ENCODE measurements at regions of chr12 and their contacts with region 1.

Region 1: DNA sequence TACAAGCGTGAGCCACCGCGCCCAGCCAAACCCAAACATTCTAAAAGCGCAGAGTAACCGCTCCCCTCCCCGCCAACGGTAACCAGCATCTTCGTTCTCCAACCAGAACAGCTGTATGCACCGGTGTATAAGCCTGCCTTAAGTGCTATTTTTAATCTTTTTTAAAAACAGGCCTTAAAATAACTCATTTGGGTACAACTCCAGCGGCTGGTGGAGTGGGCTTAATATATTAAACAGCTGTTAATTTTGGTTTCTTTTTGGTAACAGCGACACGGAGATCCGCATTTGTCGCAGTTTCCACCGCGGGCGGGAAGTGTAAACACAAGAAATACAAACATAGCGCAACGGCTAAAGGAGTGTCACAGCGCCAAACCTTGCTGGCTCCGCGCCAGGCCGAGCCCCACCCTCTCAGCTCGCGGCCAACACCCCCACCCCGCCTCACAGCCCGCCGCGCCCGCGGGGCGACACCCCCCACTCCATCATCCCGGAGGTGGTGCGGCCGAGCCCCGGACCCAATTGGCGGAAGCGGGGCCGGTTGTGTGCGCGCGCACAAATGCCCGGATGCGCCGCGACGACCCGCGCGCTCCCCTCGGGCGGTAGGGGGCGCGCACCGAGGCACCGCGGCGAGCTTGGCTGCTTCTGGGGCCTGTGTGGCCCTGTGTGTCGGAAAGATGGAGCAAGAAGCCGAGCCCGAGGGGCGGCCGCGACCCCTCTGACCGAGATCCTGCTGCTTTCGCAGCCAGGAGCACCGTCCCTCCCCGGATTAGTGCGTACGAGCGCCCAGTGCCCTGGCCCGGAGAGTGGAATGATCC is at the start of gene MDM2:
- DNase-seq: peak; percentile 94 to 99 (median 97)
- ATAC-seq: peak; percentile 91
- H3K4me3 ChIP-seq: peak within 1 kb of the TSS; percentile 97
- H3K4me3 Mint-ChIP-seq: peak within 1 kb of the TSS; percentile 95
- H3K27ac ChIP-seq: peak within 1 kb of the TSS; percentile 86 to 95
- H3K27ac Mint-ChIP-seq: peak within 1 kb of the TSS; percentile 97
- H3K4me1 ChIP-seq: peaks cover 24% of the 10 kb centered on the region
- H3K4me1 Mint-ChIP-seq: peaks cover 30% of the 10 kb centered on the region
- H3K27me3 ChIP-seq: no peaks in the 10 kb centered on the region
- H3K27me3 Mint-ChIP-seq: no peaks in the 10 kb centered on the region
- CTCF ChIP-seq: peak; percentile 66
- total RNA-seq, gene MDM2: 95.1 to 98.0 TPM

Region 2: DNA sequence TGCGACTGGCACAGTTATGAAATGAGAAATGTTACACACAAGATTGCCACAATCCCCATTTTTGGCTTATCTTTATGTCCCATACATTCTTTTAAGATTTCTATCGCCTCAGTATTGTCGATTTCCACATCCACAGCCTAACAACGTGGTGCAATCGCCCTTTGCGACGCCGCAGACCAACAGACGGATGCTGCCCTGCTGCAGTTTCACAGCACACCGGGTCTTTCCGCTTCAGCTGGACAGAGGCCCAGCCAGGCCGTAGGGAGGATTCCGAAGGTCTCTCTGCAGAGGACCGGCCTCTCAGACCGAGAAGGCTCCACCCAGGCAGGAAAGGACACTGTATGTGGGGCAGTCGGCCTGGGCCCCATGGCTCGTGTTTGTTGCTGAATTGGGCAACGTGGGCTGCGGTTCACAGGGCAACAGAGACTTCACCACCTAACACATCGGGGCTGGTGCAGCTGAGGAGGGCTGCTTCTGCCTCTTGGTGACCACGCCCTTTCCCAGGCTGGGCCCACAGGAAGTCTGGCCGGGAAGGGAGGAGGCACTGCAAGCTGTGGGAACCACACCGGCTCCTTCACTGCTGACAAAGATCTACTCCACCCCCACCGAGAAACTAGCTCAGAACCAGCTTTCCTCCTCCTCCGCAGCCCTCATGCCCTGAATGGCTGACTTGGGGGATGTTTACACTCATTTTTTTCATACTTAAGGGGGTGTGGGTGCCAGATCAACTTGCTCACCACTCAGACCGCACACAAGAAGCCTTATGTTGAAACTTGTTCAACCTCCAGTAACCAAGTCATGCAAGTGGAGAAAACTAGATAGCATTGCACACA is 442.7 kb before region 1 on chr12:
- CTCF ChIA-PET with region 1: no interaction called
- POLR2A ChIA-PET with region 1: interaction called, 5 read pairs
- intact Hi-C with region 1: loop called (anchors 1 to 10 kb)
- DNase-seq: peak; percentile 67 to 97 (median 86)
- ATAC-seq: peak; percentile 91
- H3K4me3 ChIP-seq: peak overlapping the region; percentile 32 to 54
- H3K4me3 Mint-ChIP-seq: peak overlapping the region; percentile 81
- H3K27ac ChIP-seq: peak overlapping the region; percentile 74 to 85
- H3K27ac Mint-ChIP-seq: peak overlapping the region; percentile 95
- H3K4me1 ChIP-seq: peaks cover 52% of the 10 kb centered on the region
- H3K4me1 Mint-ChIP-seq: peaks cover 73% of the 10 kb centered on the region
- H3K27me3 ChIP-seq: no peaks in the 10 kb centered on the region
- H3K27me3 Mint-ChIP-seq: no peaks in the 10 kb centered on the region
- CTCF ChIP-seq: no peak

Region 3: GRCh38 chr12:68745904-68746571 is 61.7 kb before region 1 on chr12 and contains the start of gene SLC35E3:
- CTCF ChIA-PET with region 1: interaction called, 9 read pairs
- POLR2A ChIA-PET with region 1: interaction called, 49 read pairs
- intact Hi-C with region 1: loop called (anchors 1 to 2 kb)
- DNase-seq: peak; percentile 83 to 95 (median 90)
- ATAC-seq: peak; percentile 96
- H3K4me3 ChIP-seq: peak within 1 kb of the TSS; percentile 80 to 96
- H3K4me3 Mint-ChIP-seq: peak within 1 kb of the TSS; percentile 98
- H3K27ac ChIP-seq: peak within 1 kb of the TSS; percentile 73 to 76
- H3K27ac Mint-ChIP-seq: peak within 1 kb of the TSS; percentile 97
- H3K4me1 ChIP-seq: peaks cover 21% of the 10 kb centered on the region
- H3K4me1 Mint-ChIP-seq: peaks cover 48% of the 10 kb centered on the region
- H3K27me3 ChIP-seq: no peaks in the 10 kb centered on the region
- H3K27me3 Mint-ChIP-seq: no peaks in the 10 kb centered on the region
- CTCF ChIP-seq: no peak
- total RNA-seq, gene SLC35E3: 4.0 to 5.7 TPM

Region 4: GRCh38 chr12:68831272-68831671 is 23.5 kb after region 1 on chr12:
- CTCF ChIA-PET with region 1: interaction called, 53 read pairs
- POLR2A ChIA-PET with region 1: interaction called, 16 read pairs
- intact Hi-C with region 1: no loop called
- DNase-seq: no peak
- ATAC-seq: no peak
- H3K4me3 ChIP-seq: no peak overlapping the region
- H3K4me3 Mint-ChIP-seq: no peak overlapping the region
- H3K27ac ChIP-seq: no peak overlapping the region
- H3K27ac Mint-ChIP-seq: no peak overlapping the region
- H3K4me1 ChIP-seq: no peaks in the 10 kb centered on the region
- H3K4me1 Mint-ChIP-seq: peaks cover 8% of the 10 kb centered on the region
- H3K27me3 ChIP-seq: no peaks in the 10 kb centered on the region
- H3K27me3 Mint-ChIP-seq: no peaks in the 10 kb centered on the region
- CTCF ChIP-seq: no peak